ENCODE measurements at regions of chr3 and their contacts with region 1.

Region 1: DNA sequence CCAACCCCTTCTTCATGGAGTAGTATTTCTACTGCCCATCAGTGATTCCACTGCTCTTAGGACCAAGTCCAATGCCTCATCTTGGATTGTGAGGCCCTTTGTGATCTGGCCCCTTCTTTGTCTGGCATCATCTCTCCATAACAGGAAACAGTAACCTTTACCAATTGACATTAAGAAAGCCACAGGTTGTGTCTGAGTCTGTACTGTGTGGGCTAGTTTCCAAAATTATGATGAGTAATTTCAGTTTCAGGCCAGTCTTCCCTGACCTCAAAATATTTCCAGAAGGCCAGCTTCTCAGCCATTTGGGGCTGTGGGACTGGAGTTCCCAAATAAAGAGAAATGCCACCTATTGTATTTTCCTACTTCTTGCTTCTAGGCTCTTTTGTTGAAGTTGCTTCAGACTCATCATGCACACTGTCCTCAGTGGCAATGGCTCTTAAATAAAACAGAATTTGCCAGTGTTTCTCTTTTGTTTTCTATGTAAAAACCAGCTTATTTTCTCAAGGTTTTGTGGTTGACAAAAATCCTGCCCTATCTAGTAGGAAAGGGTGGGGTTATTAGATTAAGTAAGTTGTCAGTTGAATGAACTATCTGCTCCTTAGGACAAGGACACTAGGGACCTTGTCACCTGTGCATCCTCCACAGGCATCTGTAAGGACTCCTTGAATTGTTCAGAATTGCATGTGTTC is 47.0 kb upstream of the ACKR4 start:
- ATAC-seq: no peak
- H3K4me3 ChIP-seq: no peak overlapping the region
- H3K27ac ChIP-seq: no peak overlapping the region
- H3K4me1 ChIP-seq: peaks cover 0 to 6% of the 10 kb centered on the region in 2 donors

Region 2: GRCh38 chr3:132629928-132630327 is 79.9 kb after region 1 on chr3:
- in situ Hi-C with region 1: loop called in 2 of 9 experiments (anchors 10 to 25 kb)
- ATAC-seq: peak in 3 of 8 experiments; percentile 18 to 60 (median 31)
- H3K4me3 ChIP-seq: no peak overlapping the region
- H3K27ac ChIP-seq: no peak overlapping the region
- H3K4me1 ChIP-seq: no peaks in the 10 kb centered on the region

Region 3: DNA sequence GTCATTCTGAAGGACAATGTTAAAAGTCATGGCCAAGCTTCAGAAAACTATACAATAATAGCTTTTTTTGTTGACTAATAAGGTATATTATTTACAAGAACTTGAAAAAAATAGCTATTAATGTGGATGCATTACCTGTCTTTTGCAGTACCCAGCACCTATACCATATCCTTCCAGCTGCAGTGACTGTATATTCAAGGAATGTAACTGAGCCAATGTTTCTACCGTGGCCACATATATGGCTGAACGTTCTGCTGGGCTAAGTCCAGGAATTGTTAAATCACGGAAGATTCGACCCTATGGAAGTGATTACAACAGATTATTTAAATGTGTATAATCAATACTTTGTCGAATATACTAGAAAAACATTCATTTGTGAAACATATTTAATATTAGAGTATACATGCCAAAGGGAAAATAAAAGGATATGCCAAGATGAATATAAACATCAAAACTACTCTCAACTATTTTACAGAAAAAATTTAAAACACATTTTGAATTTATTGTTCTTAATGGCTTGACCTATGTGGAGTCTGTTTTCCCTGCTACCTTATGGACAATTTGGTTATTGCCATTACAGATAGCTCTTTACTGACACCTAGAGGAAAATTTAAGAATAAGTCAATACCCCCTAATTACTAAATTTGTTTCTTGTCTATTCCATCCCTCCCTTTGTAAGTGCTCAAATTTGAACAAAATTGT is 92.0 kb after region 1 on chr3:
- in situ Hi-C with region 1: loop called in 3 of 9 experiments (anchors 10 to 25 kb)
- ATAC-seq: peak in 3 of 8 experiments; percentile 54 to 70 (median 63)
- H3K4me3 ChIP-seq: no peak overlapping the region
- H3K27ac ChIP-seq: no peak overlapping the region
- H3K4me1 ChIP-seq: no peaks in the 10 kb centered on the region